ENCODE measurements at regions of chr4 and their contacts with region 1.

Region 1: GRCh38 chr4:183504064-183504929 is 561 bp upstream of the ING2 start:
- DNase-seq: peak; percentile 98 to 99
- ATAC-seq: peak; percentile 73 to 80
- H3K4me3 ChIP-seq: peak overlapping the region; percentile 89 to 96 (median 92)
- H3K27ac ChIP-seq: peak overlapping the region; percentile 90 to 97 (median 96)
- H3K4me1 ChIP-seq: peaks cover 18 to 19% of the 10 kb centered on the region in 2 donors
- H3K27me3 ChIP-seq: no peaks in the 10 kb centered on the region
- CTCF ChIP-seq: peak; percentile 8 to 57 (median 37)
- POLR2A ChIP-seq: peak; percentile 92 to 96

Region 2: DNA sequence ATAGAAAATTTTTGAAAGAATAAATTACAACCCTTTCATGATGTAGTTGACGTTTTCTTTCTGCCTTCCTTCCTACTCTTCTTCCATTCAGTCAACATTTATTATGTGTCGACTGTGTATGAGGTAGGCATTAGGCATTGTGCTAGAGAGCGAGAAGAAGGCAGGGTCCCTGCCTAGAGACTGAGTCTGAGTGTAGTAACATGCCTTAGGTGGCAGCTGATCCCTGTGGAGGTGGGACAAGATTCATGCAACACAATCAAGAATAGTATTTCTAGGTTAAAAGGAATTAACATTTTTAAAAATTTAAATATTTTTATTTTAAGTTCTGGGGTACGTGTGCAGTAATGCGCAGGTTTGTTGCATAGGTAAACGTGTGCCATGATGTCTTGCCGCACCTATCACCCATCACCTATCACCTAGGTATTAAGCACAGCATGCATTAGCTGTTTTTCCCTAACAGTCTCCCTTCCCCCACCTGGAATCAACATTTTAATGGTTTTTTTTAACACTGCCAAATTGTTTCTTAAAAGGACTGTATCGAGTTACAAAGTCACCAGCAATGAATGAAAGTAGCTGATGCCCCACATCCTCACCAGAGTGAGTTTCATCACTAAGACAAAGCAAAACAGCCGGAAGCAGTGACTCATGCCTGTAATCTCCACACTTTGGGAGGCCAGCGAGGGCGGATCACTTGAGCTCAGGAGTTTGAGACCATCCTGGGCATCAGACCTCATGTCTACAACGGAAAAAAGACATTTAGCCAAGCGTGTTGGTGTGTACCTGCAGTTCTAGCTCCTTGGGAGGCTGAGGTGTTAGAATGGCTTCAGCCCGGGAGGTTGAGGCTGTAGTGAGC is 321.2 kb before region 1 on chr4:
- in situ Hi-C with region 1: no loop called
- intact Hi-C with region 1: no loop called
- DNase-seq: peak in 1 of 2 donors; percentile 13
- ATAC-seq: peak in 1 of 2 donors; percentile 62
- H3K4me3 ChIP-seq: no peak overlapping the region
- H3K27ac ChIP-seq: no peak overlapping the region
- H3K4me1 ChIP-seq: no peaks in the 10 kb centered on the region
- H3K27me3 ChIP-seq: no peaks in the 10 kb centered on the region
- CTCF ChIP-seq: no peak
- POLR2A ChIP-seq: no peak

Region 3: GRCh38 chr4:183229397-183229796 is 274.9 kb before region 1 on chr4:
- in situ Hi-C with region 1: no loop called
- intact Hi-C with region 1: no loop called
- DNase-seq: no peak
- ATAC-seq: no peak
- H3K4me3 ChIP-seq: no peak overlapping the region
- H3K27ac ChIP-seq: no peak overlapping the region
- H3K4me1 ChIP-seq: no peaks in the 10 kb centered on the region
- H3K27me3 ChIP-seq: no peaks in the 10 kb centered on the region
- CTCF ChIP-seq: no peak
- POLR2A ChIP-seq: no peak

Region 4: GRCh38 chr4:183398227-183399125 is 105.8 kb before region 1 on chr4:
- in situ Hi-C with region 1: no loop called
- intact Hi-C with region 1: no loop called
- DNase-seq: peak; percentile 36 to 45
- ATAC-seq: peak; percentile 62 to 86
- H3K4me3 ChIP-seq: peak overlapping the region; percentile 57 to 76 (median 62)
- H3K27ac ChIP-seq: peak overlapping the region in 2 of 4 donors; percentile 19 to 25
- H3K4me1 ChIP-seq: peaks cover 0 to 10% of the 10 kb centered on the region in 2 donors
- H3K27me3 ChIP-seq: no peaks in the 10 kb centered on the region
- CTCF ChIP-seq: peak in 3 of 5 experiments; percentile 25 to 45 (median 28)
- POLR2A ChIP-seq: no peak

Region 5: GRCh38 chr4:183444214-183445066 is 59.9 kb before region 1 on chr4 and contains the start of gene CDKN2AIP:
- in situ Hi-C with region 1: no loop called
- intact Hi-C with region 1: loop called (anchors 1 kb)
- DNase-seq: peak; percentile 85 to 89
- ATAC-seq: peak; percentile 89 to 92
- H3K4me3 ChIP-seq: peak within 1 kb of the TSS; percentile 63 to 98 (median 98)
- H3K27ac ChIP-seq: peak within 1 kb of the TSS; percentile 96 to 98 (median 97)
- H3K4me1 ChIP-seq: peaks cover 50 to 54% of the 10 kb centered on the region in 2 donors
- H3K27me3 ChIP-seq: no peaks in the 10 kb centered on the region
- CTCF ChIP-seq: peak in 2 of 5 experiments; percentile 25 to 30
- POLR2A ChIP-seq: peak; percentile 98 to 99
- total RNA-seq, gene CDKN2AIP: 9.2 to 17.3 (median 12.2) TPM

Region 6: DNA sequence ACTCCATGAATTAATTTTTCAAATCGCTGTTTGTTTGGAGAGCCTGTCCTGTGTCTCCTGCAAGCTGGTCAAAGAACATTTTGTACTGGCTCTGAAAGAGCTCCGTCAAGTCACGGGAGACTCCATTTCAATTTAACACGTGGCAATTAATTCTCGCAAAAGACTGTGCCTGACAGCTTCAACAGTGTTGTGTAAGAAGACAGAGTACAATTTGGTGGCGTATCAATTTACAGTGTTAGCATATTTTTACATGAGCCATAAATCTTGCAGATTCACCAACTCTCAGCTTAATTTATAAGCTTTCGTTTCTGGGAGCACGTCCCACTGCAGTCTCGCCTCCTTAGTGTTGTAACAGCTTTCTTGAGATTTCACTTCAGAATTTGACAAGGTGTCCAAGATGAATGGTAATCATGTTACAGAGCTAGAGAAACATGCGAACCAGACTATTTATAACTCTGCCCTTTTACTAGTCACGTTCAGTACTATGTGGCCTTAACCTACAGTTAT is 83.9 kb after region 1 on chr4:
- in situ Hi-C with region 1: no loop called
- intact Hi-C with region 1: loop called (anchors 1 kb)
- DNase-seq: peak; percentile 74 to 87
- ATAC-seq: peak; percentile 96
- H3K4me3 ChIP-seq: no peak overlapping the region
- H3K27ac ChIP-seq: peak overlapping the region; percentile 85 to 95 (median 90)
- H3K4me1 ChIP-seq: peaks cover 22 to 23% of the 10 kb centered on the region in 2 donors
- H3K27me3 ChIP-seq: no peaks in the 10 kb centered on the region
- CTCF ChIP-seq: no peak
- POLR2A ChIP-seq: peak in 1 of 2 donors; percentile 48

Region 7: GRCh38 chr4:183618681-183619080 is 114.4 kb after region 1 on chr4:
- in situ Hi-C with region 1: no loop called
- intact Hi-C with region 1: loop called (anchors 1 kb)
- DNase-seq: no peak
- ATAC-seq: peak; percentile 56 to 64
- H3K4me3 ChIP-seq: peak overlapping the region in 1 of 4 donors; percentile 30
- H3K27ac ChIP-seq: peak overlapping the region; percentile 69 to 81 (median 76)
- H3K4me1 ChIP-seq: peaks cover 7 to 9% of the 10 kb centered on the region in 2 donors
- H3K27me3 ChIP-seq: no peaks in the 10 kb centered on the region
- CTCF ChIP-seq: no peak
- POLR2A ChIP-seq: no peak

Region 8: DNA sequence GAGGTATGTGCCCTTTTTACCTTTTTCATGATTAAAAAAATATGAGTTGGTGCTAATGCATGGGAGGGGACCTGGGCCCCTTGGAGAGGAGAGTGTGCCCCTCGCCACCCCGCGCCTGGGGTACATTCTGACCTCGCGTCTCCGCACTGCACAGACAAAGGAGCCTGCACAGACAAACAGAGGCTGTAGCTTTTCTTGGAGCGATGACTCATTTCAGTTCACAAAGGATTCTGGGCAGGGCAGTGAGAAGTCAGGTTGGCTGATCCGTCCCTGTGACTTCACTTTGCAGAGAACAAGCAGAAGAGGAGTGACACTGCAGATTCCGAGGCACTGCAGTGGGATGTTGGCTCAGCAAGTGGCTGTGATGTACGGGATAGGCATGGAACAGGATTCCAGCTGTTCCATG is 483.7 kb after region 1 on chr4:
- in situ Hi-C with region 1: no loop called
- intact Hi-C with region 1: loop called (anchors 2 kb)
- DNase-seq: peak; percentile 84 to 91
- ATAC-seq: peak; percentile 97 to 98
- H3K4me3 ChIP-seq: peak overlapping the region; percentile 53 to 64 (median 56)
- H3K27ac ChIP-seq: peak overlapping the region; percentile 84 to 90 (median 89)
- H3K4me1 ChIP-seq: peaks cover 12 to 19% of the 10 kb centered on the region in 2 donors
- H3K27me3 ChIP-seq: no peaks in the 10 kb centered on the region
- CTCF ChIP-seq: no peak
- POLR2A ChIP-seq: peak; percentile 66 to 77

Measured in gastrocnemius medialis (tissue), 4 donors.